Heart left ventricle (tissue), 16 donors: ENCODE measurements at regions of chr10 and their contacts with region 1.

Region 1: GRCh38 chr10:118046395-118047156 is at the start of gene RAB11FIP2:
- DNase-seq: peak; percentile 96 to 98 (median 98)
- ATAC-seq: peak; percentile 94 to 98 (median 97)
- H3K4me3 ChIP-seq: peak within 1 kb of the TSS; percentile 69 to 97 (median 90)
- H3K27ac ChIP-seq: peak within 1 kb of the TSS; percentile 68 to 95 (median 94)
- H3K4me1 ChIP-seq: peaks cover 3 to 48% (median 40%) of the 10 kb centered on the region in 12 donors
- H3K27me3 ChIP-seq: no peaks in the 10 kb centered on the region
- CTCF ChIP-seq: peak in 7 of 12 donors; percentile 16 to 43 (median 33)
- POLR2A ChIP-seq: peak in 1 of 2 donors; percentile 66
- total RNA-seq, gene RAB11FIP2: 8.8 to 20.3 (median 13.0) TPM

Region 2: GRCh38 chr10:117830787-117831212 is 215.8 kb before region 1 on chr10:
- intact Hi-C with region 1: no loop called
- DNase-seq: no peak
- ATAC-seq: no peak
- H3K4me3 ChIP-seq: peak overlapping the region in 2 of 12 donors; percentile 0 to 17
- H3K27ac ChIP-seq: no peak overlapping the region
- H3K4me1 ChIP-seq: peaks cover 0 to 4% (median 0%) of the 10 kb centered on the region in 12 donors
- H3K27me3 ChIP-seq: peaks cover 0 to 11% (median 0%) of the 10 kb centered on the region in 9 donors
- CTCF ChIP-seq: no peak
- POLR2A ChIP-seq: no peak

Region 3: GRCh38 chr10:118332236-118332635 is 285.7 kb after region 1 on chr10:
- intact Hi-C with region 1: loop called in 1 of 10 experiments (anchors 10 kb)
- DNase-seq: no peak
- ATAC-seq: no peak
- H3K4me3 ChIP-seq: no peak overlapping the region
- H3K27ac ChIP-seq: no peak overlapping the region
- H3K4me1 ChIP-seq: peaks cover 0 to 16% (median under 1%) of the 10 kb centered on the region in 12 donors
- H3K27me3 ChIP-seq: no peaks in the 10 kb centered on the region
- CTCF ChIP-seq: no peak
- POLR2A ChIP-seq: no peak